ENCODE measurements at regions of chr5 and their contacts with region 1.

Region 1: DNA sequence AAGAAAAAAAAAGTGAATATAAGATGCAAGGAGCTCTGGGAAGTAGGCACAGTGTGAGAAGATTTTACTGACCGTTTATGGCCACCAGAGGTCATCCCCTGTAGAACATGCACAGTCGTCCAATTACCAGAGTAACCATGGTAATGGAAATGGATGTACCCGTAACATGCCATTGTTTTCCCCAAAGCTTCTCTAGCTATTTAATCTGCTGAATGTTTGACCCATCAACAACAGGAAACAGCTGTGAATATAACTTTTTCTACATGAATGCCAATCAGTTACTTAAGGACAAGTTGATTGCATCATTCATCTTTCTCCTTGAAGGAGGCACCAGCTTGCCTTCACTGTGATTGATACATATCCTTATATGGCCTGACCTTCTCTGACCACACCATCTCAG is 1967.0 kb upstream of the CDH9 start:
- DNase-seq: peak; percentile 44
- ATAC-seq: peak; percentile 73
- H3K4me3 ChIP-seq: no peak overlapping the region
- H3K27ac ChIP-seq: no peak overlapping the region
- H3K4me1 ChIP-seq: no peaks in the 10 kb centered on the region
- H3K27me3 ChIP-seq: no peaks in the 10 kb centered on the region
- CTCF ChIP-seq: peak; percentile 59

Region 2: GRCh38 chr5:28914297-28914696 is 91.1 kb before region 1 on chr5:
- CTCF ChIA-PET with region 1: no interaction called
- POLR2A ChIA-PET with region 1: no interaction called
- intact Hi-C with region 1: loop called (anchors 10 kb)
- DNase-seq: no peak
- ATAC-seq: no peak
- H3K4me3 ChIP-seq: no peak overlapping the region
- H3K27ac ChIP-seq: no peak overlapping the region
- H3K4me1 ChIP-seq: no peaks in the 10 kb centered on the region
- H3K27me3 ChIP-seq: no peaks in the 10 kb centered on the region
- CTCF ChIP-seq: no peak

Region 3: DNA sequence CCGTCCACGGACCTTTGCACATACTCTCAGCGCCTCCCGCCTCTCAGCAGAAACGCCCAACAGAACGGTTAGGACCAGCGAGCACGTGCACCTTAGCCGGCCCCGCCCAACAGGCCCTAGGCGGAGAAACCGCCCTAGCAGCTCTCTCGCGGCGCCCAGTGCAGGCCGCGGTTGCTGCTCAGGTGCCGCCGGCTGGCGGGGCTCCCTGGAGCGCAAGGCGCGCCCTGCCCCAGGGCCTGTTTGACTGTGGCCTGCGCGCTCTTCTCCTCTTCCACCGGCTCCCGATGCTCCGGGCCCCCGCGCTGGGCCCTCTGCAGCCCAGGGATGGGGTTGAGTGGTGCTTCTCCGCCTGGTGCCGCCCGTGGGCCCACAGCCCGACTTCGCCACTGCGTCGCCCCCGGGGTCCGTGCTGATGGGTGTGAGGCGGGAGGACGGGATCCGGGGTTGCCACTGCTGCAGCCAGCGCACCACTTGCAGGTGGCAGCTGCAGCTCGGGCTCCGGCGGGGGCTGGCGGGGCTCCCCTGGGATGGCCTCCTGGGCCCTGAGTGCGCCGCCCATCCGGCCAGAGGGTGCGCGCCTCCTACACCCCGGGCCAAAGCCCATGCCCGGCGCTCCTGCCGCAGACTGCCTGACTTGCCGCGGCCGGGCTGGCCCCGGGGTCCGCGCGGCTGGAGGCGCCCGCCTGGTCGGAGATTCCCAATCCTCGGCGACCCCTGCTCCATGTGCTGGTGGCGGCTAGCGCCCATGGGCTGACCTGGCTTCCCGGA is 77.6 kb before region 1 on chr5:
- CTCF ChIA-PET with region 1: no interaction called
- POLR2A ChIA-PET with region 1: no interaction called
- intact Hi-C with region 1: no loop called
- DNase-seq: no peak
- ATAC-seq: no peak
- H3K4me3 ChIP-seq: no peak overlapping the region
- H3K27ac ChIP-seq: no peak overlapping the region
- H3K4me1 ChIP-seq: no peaks in the 10 kb centered on the region
- H3K27me3 ChIP-seq: no peaks in the 10 kb centered on the region
- CTCF ChIP-seq: no peak

Region 4: DNA sequence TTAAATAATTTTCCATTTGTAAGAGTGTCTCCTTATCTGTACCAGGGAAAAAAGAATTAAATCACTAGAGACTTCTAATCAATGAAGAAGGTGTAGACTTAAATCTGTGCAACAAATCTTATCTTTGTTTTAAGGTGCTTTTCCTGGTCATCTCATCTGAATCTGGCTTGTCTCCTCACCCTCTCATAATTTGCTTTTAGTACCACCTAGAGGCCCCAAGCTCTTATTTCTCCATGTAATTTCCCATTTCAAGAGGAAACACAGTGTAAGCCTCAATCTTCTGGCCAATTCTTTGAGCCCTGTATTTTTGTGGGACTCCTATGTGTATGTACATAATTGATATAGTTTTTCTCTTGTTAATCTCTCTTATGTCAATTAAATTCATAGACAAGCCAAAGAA is 212.7 kb after region 1 on chr5:
- CTCF ChIA-PET with region 1: interaction called, 5 read pairs
- POLR2A ChIA-PET with region 1: no interaction called
- intact Hi-C with region 1: loop called (anchors 1 kb)
- DNase-seq: peak; percentile 24
- ATAC-seq: peak; percentile 53
- H3K4me3 ChIP-seq: no peak overlapping the region
- H3K27ac ChIP-seq: no peak overlapping the region
- H3K4me1 ChIP-seq: no peaks in the 10 kb centered on the region
- H3K27me3 ChIP-seq: no peaks in the 10 kb centered on the region
- CTCF ChIP-seq: peak; percentile 41